Left ventricle myocardium superior (tissue), 1 donor: ENCODE measurements at regions of chr6 and their contacts with region 1.

Region 1: DNA sequence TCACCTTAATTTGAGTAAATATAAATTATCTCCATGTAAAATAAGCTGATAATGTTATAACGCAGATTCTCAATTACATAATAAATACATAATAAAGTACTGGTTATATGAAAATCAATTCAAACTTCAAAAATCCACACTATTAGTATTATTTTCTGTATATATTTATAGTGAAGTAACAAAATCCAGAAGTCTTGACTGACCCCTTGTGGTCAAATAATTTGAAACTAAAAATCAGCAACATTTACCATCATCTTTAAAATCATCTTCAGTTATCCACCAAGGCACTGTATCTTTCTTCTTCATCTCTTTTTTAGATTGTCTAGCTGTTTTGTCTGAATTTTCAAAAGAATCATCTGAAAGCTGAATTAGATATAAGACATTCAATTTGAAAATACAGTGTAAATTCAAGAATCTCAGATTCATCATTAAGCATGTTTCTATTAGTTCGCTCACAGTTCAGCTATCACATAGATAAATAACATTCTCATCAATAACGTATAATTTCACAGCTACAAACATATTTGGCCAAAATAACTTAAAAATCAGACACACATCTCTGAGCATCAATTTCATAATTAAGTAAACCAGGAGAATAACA is 6.5 kb downstream of the CEP162 start:
- DNase-seq: no peak
- ATAC-seq: no peak

Region 2: GRCh38 chr6:83884523-83884922 is 336.4 kb before region 1 on chr6:
- intact Hi-C with region 1: loop called (anchors 2 kb)
- DNase-seq: no peak
- ATAC-seq: peak; percentile 50

Region 3: GRCh38 chr6:83948851-83949250 is 272.1 kb before region 1 on chr6:
- intact Hi-C with region 1: no loop called
- DNase-seq: no peak
- ATAC-seq: no peak

Region 4: GRCh38 chr6:84177241-84177640 is 43.7 kb before region 1 on chr6:
- intact Hi-C with region 1: no loop called
- DNase-seq: peak; percentile 38
- ATAC-seq: no peak

Region 5: DNA sequence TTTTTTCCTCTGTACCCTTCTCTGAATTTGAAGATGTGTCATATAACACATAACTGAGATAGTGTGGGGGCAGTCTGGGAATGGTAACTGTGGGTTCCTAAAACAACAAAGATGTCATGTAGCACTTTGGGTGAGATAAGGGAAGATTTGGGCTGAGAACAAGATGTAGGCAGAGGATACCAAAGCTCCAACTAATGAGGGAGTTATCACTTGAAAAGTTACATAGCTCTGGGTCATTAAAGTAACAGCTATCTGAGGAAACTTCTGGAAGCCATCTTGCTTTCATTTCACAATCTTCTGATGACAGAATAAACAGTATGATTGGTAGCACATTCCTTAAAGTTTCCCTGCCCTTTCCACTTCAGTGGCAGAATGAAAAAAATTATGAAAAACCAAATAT is 288.1 kb after region 1 on chr6:
- intact Hi-C with region 1: no loop called
- DNase-seq: no peak
- ATAC-seq: no peak